ENCODE measurements at regions of chr5 and their contacts with region 1.

Region 1: DNA sequence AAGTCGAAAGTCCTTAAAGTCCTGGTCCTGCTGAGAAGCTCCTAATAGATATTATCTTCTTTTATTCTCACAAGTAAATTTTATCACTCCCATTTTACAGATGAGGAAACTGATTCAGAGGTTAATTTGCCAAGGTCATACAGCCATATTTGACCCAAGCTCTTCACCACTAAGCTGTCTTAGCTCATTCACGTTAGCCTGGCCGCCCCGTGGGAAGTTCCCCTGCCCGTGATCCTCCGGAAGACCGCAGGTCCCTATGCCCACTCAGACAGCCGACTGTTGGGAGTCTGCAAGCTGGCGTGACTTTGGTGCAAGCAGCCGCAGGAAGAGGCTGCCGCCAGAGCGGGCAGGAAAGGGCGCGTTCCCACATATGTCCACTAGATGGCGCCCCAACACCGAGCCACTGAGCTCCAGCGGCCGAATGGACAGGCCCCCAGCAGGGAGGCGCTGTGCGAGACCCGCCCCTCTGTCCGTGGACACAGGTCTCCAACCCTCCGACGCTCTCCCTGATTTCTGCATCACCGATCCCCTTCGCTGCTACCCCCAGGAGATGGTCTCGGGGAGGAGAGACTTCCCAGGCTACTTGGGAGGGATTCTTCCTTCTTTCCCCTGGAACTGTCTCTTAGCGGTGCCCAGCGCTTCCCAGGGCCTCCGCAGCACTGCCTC is 10.0 kb upstream of the ARAP3 start:
- DNase-seq: peak; percentile 93
- ATAC-seq: peak; percentile 71
- H3K4me3 Mint-ChIP-seq: peak overlapping the region; percentile 64
- H3K27ac Mint-ChIP-seq: peak overlapping the region; percentile 55
- H3K4me1 Mint-ChIP-seq: peaks cover 25% of the 10 kb centered on the region
- H3K27me3 Mint-ChIP-seq: peaks cover 4% of the 10 kb centered on the region

Region 2: GRCh38 chr5:140595538-140596300 is 1096.3 kb before region 1 on chr5:
- CTCF ChIA-PET with region 1: no interaction called
- POLR2A ChIA-PET with region 1: no interaction called
- intact Hi-C with region 1: no loop called
- DNase-seq: no peak
- ATAC-seq: no peak
- H3K4me3 Mint-ChIP-seq: no peak overlapping the region
- H3K27ac Mint-ChIP-seq: no peak overlapping the region
- H3K4me1 Mint-ChIP-seq: peaks cover 2% of the 10 kb centered on the region
- H3K27me3 Mint-ChIP-seq: no peaks in the 10 kb centered on the region

Region 3: GRCh38 chr5:141664732-141665461 is 27.1 kb before region 1 on chr5:
- CTCF ChIA-PET with region 1: interaction called, 15 read pairs
- POLR2A ChIA-PET with region 1: no interaction called
- intact Hi-C with region 1: no loop called
- DNase-seq: peak; percentile 86
- ATAC-seq: peak; percentile 97
- H3K4me3 Mint-ChIP-seq: no peak overlapping the region
- H3K27ac Mint-ChIP-seq: no peak overlapping the region
- H3K4me1 Mint-ChIP-seq: peaks cover 4% of the 10 kb centered on the region
- H3K27me3 Mint-ChIP-seq: no peaks in the 10 kb centered on the region

Region 4: DNA sequence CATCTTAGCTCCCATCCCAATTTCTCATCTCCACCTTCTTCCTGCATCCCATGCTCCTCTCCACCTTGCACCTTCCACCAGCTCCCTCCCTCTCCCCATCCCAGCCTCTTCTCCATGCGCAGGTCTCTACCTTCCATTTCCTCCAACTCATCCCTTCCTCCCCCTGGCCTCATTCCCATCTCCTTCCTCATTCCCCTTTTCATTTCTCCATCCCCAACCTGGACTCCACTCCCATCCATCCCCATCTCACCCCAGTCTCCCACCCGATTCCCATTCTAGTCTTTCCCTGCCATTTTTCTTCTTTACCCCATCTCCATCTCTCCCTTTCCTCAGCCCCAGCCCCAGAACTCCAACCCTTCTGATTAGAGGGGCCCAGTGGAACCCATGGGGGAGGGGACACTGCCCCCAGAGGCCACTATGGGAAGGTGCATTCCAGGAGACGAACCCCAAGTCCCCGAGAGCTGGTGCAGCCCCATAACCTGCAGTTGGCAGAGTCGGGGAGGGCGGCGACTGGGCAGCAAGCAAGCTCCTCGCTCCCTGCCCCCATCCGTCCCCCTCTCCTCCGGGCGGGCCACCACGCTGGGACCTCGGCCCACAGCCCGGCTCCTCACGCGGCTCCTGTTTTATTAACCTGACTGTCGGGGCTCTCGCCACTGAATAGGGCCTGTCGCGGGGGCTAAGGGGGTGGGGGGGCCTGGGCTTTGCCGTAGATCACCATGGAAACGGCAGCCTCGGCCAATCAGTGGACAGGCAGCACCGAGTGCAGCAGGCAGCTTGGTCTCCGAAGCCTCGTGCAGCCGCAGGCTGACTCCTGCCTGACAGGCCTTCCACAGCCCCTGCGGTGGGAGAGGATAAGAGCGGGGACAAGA is 119.5 kb after region 1 on chr5:
- CTCF ChIA-PET with region 1: interaction called, 19 read pairs
- POLR2A ChIA-PET with region 1: no interaction called
- intact Hi-C with region 1: loop called in 1 of 2 experiments (anchors 1 kb)
- DNase-seq: peak; percentile 52
- ATAC-seq: peak; percentile 83
- H3K4me3 Mint-ChIP-seq: no peak overlapping the region
- H3K27ac Mint-ChIP-seq: no peak overlapping the region
- H3K4me1 Mint-ChIP-seq: no peaks in the 10 kb centered on the region
- H3K27me3 Mint-ChIP-seq: peaks cover 41% of the 10 kb centered on the region

Region 5: GRCh38 chr5:141914199-141914743 is 222.3 kb after region 1 on chr5:
- CTCF ChIA-PET with region 1: interaction called, 10 read pairs
- POLR2A ChIA-PET with region 1: no interaction called
- intact Hi-C with region 1: loop called in 1 of 2 experiments (anchors 2 kb)
- DNase-seq: peak; percentile 43
- ATAC-seq: peak; percentile 69
- H3K4me3 Mint-ChIP-seq: no peak overlapping the region
- H3K27ac Mint-ChIP-seq: no peak overlapping the region
- H3K4me1 Mint-ChIP-seq: peaks cover 8% of the 10 kb centered on the region
- H3K27me3 Mint-ChIP-seq: peaks cover 26% of the 10 kb centered on the region

Region 6: GRCh38 chr5:142095651-142096330 is 403.8 kb after region 1 on chr5:
- CTCF ChIA-PET with region 1: no interaction called
- POLR2A ChIA-PET with region 1: no interaction called
- intact Hi-C with region 1: loop called in 1 of 2 experiments (anchors 5 kb)
- DNase-seq: peak; percentile 93
- ATAC-seq: peak; percentile 91
- H3K4me3 Mint-ChIP-seq: peak overlapping the region; percentile 53
- H3K27ac Mint-ChIP-seq: peak overlapping the region; percentile 97
- H3K4me1 Mint-ChIP-seq: peaks cover 77% of the 10 kb centered on the region
- H3K27me3 Mint-ChIP-seq: no peaks in the 10 kb centered on the region

Measured in activated CD4-positive, alpha-beta T cell treated with anti-CD3 and anti-CD28 coated beads for 36 hours (primary cell).